ENCODE measurements at regions of chr7 and their contacts with region 1.

Region 1: GRCh38 chr7:3065724-3066143 is 22.1 kb upstream of the CARD11 start:
- DNase-seq: peak; percentile 56 to 71 (median 60)
- H3K4me3 ChIP-seq: no peak overlapping the region
- H3K4me3 Mint-ChIP-seq: peak overlapping the region; percentile 17 to 90 (median 78)
- H3K27ac ChIP-seq: peak overlapping the region; percentile 14
- H3K27ac Mint-ChIP-seq: peak overlapping the region; percentile 72 to 98 (median 90)
- H3K4me1 ChIP-seq: peaks cover 81% of the 10 kb centered on the region
- H3K4me1 Mint-ChIP-seq: peaks cover 57 to 89% (median 71%) of the 10 kb centered on the region in 4 donors
- H3K27me3 ChIP-seq: no peaks in the 10 kb centered on the region
- H3K27me3 Mint-ChIP-seq: no peaks in the 10 kb centered on the region

Region 2: DNA sequence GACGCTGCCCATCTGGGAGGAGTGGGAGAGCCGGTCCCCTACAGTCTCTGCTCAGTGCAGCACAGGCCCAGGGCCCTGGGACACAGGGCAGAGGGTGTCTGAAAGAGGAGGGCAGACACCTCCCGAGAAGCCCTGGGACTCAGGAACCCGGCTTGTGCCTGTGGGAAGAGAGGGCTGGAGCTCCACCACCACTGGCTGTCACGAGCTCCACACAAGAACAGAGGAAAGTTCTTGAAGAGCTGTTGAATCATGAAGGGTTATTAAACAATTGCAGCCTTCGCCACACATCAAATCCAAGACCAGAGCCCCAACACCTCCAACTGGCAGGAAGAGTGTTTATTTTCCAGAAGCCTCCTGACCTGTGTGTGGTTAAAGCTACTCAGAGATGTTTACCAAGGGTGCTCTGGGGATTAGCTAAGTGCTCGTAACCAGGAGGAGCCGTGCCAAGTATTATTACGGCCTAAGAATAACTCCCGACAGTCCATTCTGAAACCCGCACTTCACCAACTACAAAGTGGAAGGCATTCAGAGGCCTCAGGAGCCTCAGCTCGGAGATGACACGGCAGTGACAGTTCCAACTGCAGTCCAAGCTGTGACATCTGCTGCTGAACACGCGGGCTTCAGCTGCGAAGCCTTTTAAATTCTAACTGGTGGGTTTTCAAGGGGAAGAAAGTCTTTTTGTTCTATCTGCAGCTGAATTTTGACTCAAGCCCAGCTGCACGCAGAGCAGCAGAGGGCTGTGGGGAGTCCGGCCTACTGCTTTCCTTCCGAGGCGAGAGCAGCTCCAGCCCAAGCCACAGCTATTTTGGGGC is 908.1 kb before region 1 on chr7:
- CTCF ChIA-PET with region 1: no interaction called
- POLR2A ChIA-PET with region 1: no interaction called
- intact Hi-C with region 1: no loop called
- DNase-seq: no peak
- H3K4me3 ChIP-seq: no peak overlapping the region
- H3K4me3 Mint-ChIP-seq: no peak overlapping the region
- H3K27ac ChIP-seq: no peak overlapping the region
- H3K27ac Mint-ChIP-seq: no peak overlapping the region
- H3K4me1 ChIP-seq: no peaks in the 10 kb centered on the region
- H3K4me1 Mint-ChIP-seq: peaks cover 0 to 4% (median 2%) of the 10 kb centered on the region in 4 donors
- H3K27me3 ChIP-seq: no peaks in the 10 kb centered on the region
- H3K27me3 Mint-ChIP-seq: no peaks in the 10 kb centered on the region

Region 3: GRCh38 chr7:2886900-2887299 is 178.8 kb before region 1 on chr7:
- CTCF ChIA-PET with region 1: interaction called, 16 read pairs
- POLR2A ChIA-PET with region 1: no interaction called
- intact Hi-C with region 1: no loop called
- DNase-seq: peak; percentile 49 to 65 (median 50)
- H3K4me3 ChIP-seq: no peak overlapping the region
- H3K4me3 Mint-ChIP-seq: no peak overlapping the region
- H3K27ac ChIP-seq: no peak overlapping the region
- H3K27ac Mint-ChIP-seq: peak overlapping the region in 2 of 7 donors; percentile 1 to 2
- H3K4me1 ChIP-seq: no peaks in the 10 kb centered on the region
- H3K4me1 Mint-ChIP-seq: peaks cover 3 to 7% (median 4%) of the 10 kb centered on the region in 4 donors
- H3K27me3 ChIP-seq: no peaks in the 10 kb centered on the region
- H3K27me3 Mint-ChIP-seq: no peaks in the 10 kb centered on the region

Region 4: DNA sequence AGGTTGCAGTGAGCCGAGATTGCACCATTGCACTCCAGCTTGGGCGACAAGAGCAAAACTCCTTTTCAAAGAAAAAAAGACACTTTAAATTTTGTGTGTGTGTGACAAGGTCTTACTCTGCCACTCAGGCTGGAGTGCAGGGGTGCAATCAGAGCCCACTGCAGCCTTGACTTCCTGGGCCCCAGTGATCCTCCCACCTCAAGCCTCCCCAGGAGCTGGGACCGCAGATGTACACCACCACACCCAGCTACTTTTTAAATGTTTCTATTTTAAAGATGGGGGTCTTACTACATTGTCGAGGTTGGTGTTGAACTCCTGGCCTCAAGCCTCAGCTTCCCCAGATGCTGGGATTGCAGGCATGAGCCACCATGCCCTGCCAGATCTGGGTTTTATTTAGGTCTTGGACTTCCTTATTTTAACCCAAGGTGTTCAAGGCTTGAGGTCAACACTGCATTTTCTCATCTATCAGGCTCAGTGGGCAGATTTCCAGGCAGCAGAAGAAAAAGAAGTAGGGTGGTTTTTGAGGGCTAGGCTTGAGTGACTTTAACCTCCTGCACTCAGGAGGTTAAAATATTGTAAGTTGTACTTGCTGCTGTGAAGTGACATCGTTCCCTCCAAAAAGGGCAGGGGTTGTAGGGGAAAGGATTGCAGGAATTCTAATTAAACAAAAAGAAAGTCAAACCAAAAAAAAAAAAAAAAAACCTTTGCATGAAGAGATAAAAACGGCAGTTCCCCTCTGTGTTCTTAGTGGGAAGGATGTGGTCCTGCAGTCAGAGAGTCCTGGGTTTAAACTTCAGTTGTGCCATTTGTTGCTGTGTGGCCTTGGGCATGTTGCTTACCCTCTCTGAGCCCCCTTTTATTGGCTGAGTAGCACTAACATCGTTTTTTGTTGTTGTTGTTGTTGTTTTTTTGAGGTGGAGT is 93.6 kb before region 1 on chr7:
- CTCF ChIA-PET with region 1: no interaction called
- POLR2A ChIA-PET with region 1: no interaction called
- intact Hi-C with region 1: no loop called
- DNase-seq: no peak
- H3K4me3 ChIP-seq: no peak overlapping the region
- H3K4me3 Mint-ChIP-seq: no peak overlapping the region
- H3K27ac ChIP-seq: no peak overlapping the region
- H3K27ac Mint-ChIP-seq: peak overlapping the region in 5 of 7 donors; percentile 35 to 76 (median 65)
- H3K4me1 ChIP-seq: no peaks in the 10 kb centered on the region
- H3K4me1 Mint-ChIP-seq: peaks cover 5 to 35% (median 20%) of the 10 kb centered on the region in 4 donors
- H3K27me3 ChIP-seq: no peaks in the 10 kb centered on the region
- H3K27me3 Mint-ChIP-seq: no peaks in the 10 kb centered on the region

Region 5: GRCh38 chr7:3042861-3043489 is 22.8 kb before region 1 on chr7:
- CTCF ChIA-PET with region 1: interaction called, 37 read pairs
- POLR2A ChIA-PET with region 1: interaction called, 15 read pairs
- intact Hi-C with region 1: loop called (anchors 2 kb)
- DNase-seq: peak; percentile 55 to 87 (median 64)
- H3K4me3 ChIP-seq: peak overlapping the region; percentile 66 to 84
- H3K4me3 Mint-ChIP-seq: peak overlapping the region; percentile 92 to 97 (median 96)
- H3K27ac ChIP-seq: peak overlapping the region; percentile 93
- H3K27ac Mint-ChIP-seq: peak overlapping the region; percentile 90 to 97 (median 95)
- H3K4me1 ChIP-seq: peaks cover 60% of the 10 kb centered on the region
- H3K4me1 Mint-ChIP-seq: peaks cover 36 to 72% (median 50%) of the 10 kb centered on the region in 4 donors
- H3K27me3 ChIP-seq: no peaks in the 10 kb centered on the region
- H3K27me3 Mint-ChIP-seq: no peaks in the 10 kb centered on the region

Region 6: GRCh38 chr7:3112479-3113134 is 46.9 kb after region 1 on chr7:
- CTCF ChIA-PET with region 1: interaction called, 10 read pairs
- POLR2A ChIA-PET with region 1: interaction called, 13 read pairs
- intact Hi-C with region 1: no loop called
- DNase-seq: peak in 2 of 5 donors; percentile 17 to 59
- H3K4me3 ChIP-seq: no peak overlapping the region
- H3K4me3 Mint-ChIP-seq: peak overlapping the region in 7 of 8 donors; percentile 10 to 74 (median 49)
- H3K27ac ChIP-seq: peak overlapping the region; percentile 6
- H3K27ac Mint-ChIP-seq: peak overlapping the region; percentile 3 to 92 (median 62)
- H3K4me1 ChIP-seq: peaks cover 56% of the 10 kb centered on the region
- H3K4me1 Mint-ChIP-seq: peaks cover 52 to 97% (median 65%) of the 10 kb centered on the region in 4 donors
- H3K27me3 ChIP-seq: no peaks in the 10 kb centered on the region
- H3K27me3 Mint-ChIP-seq: no peaks in the 10 kb centered on the region

Region 7: DNA sequence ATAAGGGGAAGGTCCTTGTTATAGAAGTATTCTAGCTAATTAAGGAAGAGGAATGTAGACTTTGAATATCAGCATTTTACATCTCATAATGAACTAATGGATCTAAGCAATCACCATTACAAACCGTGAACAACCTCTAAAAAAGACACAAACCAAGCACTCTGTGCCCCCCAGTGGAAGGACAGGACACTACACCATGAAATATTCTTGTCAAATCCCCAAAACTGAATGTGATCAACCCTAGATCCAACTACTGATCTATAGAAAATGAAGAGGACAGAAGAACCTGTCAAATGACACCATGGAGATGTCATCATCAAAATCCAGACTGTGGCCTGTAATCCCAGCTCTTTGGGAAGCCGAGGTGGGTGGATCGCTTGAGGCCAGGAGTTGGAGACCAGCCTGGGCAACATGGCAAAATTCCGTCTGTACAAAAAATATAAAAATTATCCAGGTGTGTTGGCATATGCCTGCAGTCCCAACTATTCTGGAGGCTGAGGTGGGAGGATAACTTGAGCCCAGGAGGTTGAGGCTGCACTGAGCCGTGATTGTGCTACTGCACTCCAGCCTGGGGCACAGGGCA is 89.3 kb after region 1 on chr7:
- CTCF ChIA-PET with region 1: interaction called, 163 read pairs
- POLR2A ChIA-PET with region 1: interaction called, 3 read pairs
- intact Hi-C with region 1: loop called (anchors 1 kb)
- DNase-seq: peak; percentile 64 to 74 (median 66)
- H3K4me3 ChIP-seq: no peak overlapping the region
- H3K4me3 Mint-ChIP-seq: no peak overlapping the region
- H3K27ac ChIP-seq: no peak overlapping the region
- H3K27ac Mint-ChIP-seq: peak overlapping the region in 2 of 7 donors; percentile 1 to 13
- H3K4me1 ChIP-seq: no peaks in the 10 kb centered on the region
- H3K4me1 Mint-ChIP-seq: peaks cover 6 to 18% (median 8%) of the 10 kb centered on the region in 4 donors
- H3K27me3 ChIP-seq: no peaks in the 10 kb centered on the region
- H3K27me3 Mint-ChIP-seq: peaks cover 0 to 1% of the 10 kb centered on the region in 2 donors

Measured in CD4-positive, alpha-beta memory T cell (primary cell).